Head of caudate nucleus (tissue), 42 donors: ENCODE measurements at regions of chr11 and their contacts with region 1.

Region 1: DNA sequence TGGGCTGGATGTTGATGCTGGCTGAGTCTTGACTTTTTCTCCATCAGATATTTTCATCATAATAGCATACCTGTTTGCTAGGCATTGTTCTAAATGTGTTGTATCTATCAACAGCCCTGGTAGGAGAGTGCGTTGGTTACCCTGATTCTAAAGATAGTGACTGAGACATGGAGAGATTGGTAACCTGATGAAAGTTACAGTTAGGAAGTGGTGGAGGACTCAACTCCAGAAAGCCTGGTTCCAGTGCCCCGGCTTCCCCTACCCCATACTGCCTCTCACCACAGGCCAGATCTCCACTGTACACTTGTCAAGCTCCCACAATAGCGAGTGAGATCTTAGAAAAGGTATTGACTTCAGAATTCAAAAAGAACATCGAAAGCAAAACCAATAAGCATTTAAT is 22.8 kb upstream of the RELT start:
- DNase-seq: no peak

Region 2: DNA sequence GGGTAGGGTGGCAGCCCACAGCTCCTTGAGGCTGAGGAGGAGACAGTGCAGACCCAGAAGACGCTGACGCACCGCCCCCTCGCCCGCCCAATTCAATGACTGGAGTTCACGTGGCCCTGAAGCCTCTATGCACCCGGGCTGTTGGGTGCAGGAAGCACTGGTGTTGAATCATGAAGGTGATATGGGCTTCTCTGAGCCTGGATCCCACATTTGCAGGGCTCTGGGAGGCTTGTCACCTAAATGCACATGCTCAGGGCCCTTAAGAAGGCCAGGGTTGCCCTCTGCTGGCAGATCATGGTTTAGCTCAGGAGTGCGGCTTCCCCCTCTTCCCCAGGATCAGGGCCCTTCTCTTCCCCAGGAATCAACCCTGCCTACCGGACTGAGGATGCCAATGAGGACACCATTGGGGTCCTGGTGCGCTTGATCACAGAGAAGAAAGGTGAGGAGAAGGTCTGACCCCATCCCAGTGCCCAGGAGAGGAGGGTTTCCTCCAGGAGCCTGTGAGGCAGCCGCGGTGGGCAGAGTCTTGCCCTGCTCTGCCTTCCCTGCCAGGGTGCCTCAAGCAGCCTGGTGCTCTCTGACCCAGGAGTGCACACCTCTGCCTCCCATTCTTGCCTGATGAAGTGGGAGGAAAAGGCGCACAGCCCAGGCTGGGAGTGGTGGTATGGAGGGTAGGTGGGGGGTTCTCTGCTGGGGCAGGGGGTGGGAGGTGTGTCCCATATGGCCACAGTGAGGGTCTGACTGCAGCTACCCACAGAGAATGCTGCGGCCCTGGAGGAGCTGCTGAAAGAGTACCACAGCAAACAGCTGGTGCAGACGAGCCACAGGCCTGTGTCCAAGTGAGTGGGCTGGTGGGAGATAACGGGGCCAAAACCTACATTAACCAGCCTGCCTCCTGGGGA is 40.3 kb after region 1 on chr11:
- intact Hi-C with region 1: loop called (anchors 2 kb)
- DNase-seq: peak; percentile 62 to 92 (median 82)